Cardiac septum (tissue), 1 donor: ENCODE measurements at regions of chr2 and their contacts with region 1.

Region 1: GRCh38 chr2:130372055-130372832 is 16.4 kb downstream of the PTPN18 start:
- DNase-seq: peak; percentile 94

Region 2: GRCh38 chr2:130355578-130356431 is 16.4 kb before region 1 on chr2 and contains the start of gene PTPN18:
- intact Hi-C with region 1: loop called (anchors 2 kb)
- DNase-seq: peak; percentile 96
- total RNA-seq, gene PTPN18: 13.4 TPM

Region 3: GRCh38 chr2:130391058-130391871 is 19.0 kb after region 1 on chr2:
- intact Hi-C with region 1: loop called (anchors 2 kb)
- DNase-seq: peak; percentile 93